ENCODE measurements at regions of chr1 and their contacts with region 1.

Region 1: GRCh38 chr1:180631766-180632325 is at the start of gene XPR1:
- DNase-seq: peak; percentile 80 to 99 (median 96)
- ATAC-seq: peak; percentile 99
- H3K4me3 ChIP-seq: peak within 1 kb of the TSS; percentile 85
- H3K4me3 Mint-ChIP-seq: no peak within 1 kb of the TSS
- H3K27ac ChIP-seq: peak within 1 kb of the TSS; percentile 94
- H3K27ac Mint-ChIP-seq: peak within 1 kb of the TSS in 5 of 9 donors; percentile 91 to 95 (median 93)
- H3K4me1 ChIP-seq: peaks cover 12 to 16% of the 10 kb centered on the region in 2 donors
- H3K4me1 Mint-ChIP-seq: peaks cover 0 to 19% (median 13%) of the 10 kb centered on the region in 7 donors
- H3K27me3 ChIP-seq: no peaks in the 10 kb centered on the region
- H3K27me3 Mint-ChIP-seq: peaks cover 0 to 10% (median 5%) of the 10 kb centered on the region in 5 donors
- total RNA-seq, gene XPR1: 12.9 to 19.7 (median 15.4) TPM

Region 2: DNA sequence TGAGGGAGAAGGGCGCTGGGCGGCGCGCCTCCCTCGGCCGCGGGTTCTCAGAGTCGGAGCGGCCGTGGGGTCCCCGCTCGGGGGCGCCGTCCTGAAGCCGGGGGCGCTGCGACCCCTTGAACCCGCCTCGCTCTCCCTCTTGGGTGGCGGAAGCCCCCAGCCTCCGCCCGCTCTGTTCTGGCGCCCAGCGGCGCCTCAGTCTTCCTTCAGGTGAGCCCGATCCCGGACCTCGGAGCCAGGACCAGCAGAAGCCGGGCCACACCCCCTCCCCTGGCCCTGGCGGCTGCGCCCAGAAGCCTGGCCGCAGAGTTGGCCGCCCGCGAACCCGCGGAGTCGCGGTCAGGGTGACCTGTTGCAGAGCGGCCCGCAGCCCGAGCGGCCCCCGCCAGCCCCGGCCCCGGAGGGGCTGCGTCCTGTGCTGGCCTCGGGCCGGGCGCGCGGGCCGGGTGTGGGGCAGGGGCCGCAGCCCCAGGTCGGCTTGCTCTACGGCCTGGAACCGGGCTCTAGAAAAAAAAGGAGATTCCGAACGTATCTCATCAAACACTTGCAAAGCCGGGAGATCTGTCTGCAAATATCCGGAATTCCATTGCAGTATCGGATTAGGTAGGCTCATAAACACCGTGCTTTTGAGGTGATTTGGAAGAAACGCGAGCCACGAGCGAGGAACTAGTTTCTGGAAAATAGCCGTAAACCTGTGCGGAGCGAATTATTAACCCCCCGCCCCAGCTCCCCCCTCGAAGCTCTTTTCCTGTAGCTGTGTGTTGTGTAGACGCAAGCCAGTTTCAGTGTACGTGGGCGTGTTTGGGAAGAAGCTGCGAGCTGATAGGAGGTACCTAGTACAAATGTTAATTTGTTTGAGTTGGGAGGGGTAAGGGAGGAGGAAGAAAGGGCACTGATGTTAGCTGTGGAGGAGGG is 1906.0 kb before region 1 on chr1:
- CTCF ChIA-PET with region 1: no interaction called
- POLR2A ChIA-PET with region 1: no interaction called
- intact Hi-C with region 1: loop called in 1 of 2 experiments (anchors 10 kb)
- DNase-seq: peak; percentile 25 to 83 (median 73)
- ATAC-seq: peak; percentile 85
- H3K4me3 ChIP-seq: peak overlapping the region; percentile 93
- H3K4me3 Mint-ChIP-seq: peak overlapping the region; percentile 79 to 96 (median 88)
- H3K27ac ChIP-seq: peak overlapping the region; percentile 86
- H3K27ac Mint-ChIP-seq: peak overlapping the region; percentile 14 to 95 (median 88)
- H3K4me1 ChIP-seq: peaks cover 0 to 5% of the 10 kb centered on the region in 2 donors
- H3K4me1 Mint-ChIP-seq: peaks cover 11 to 39% (median 27%) of the 10 kb centered on the region in 7 donors
- H3K27me3 ChIP-seq: no peaks in the 10 kb centered on the region
- H3K27me3 Mint-ChIP-seq: peaks cover 0 to 29% (median 0%) of the 10 kb centered on the region in 5 donors

Region 3: GRCh38 chr1:179809506-179810366 is 822.1 kb before region 1 on chr1:
- CTCF ChIA-PET with region 1: no interaction called
- POLR2A ChIA-PET with region 1: no interaction called
- intact Hi-C with region 1: loop called in 1 of 2 experiments (anchors 1 kb)
- DNase-seq: peak; percentile 53 to 82 (median 78)
- ATAC-seq: peak; percentile 87
- H3K4me3 ChIP-seq: no peak overlapping the region
- H3K4me3 Mint-ChIP-seq: peak overlapping the region in 5 of 10 donors; percentile 20 to 46 (median 32)
- H3K27ac ChIP-seq: no peak overlapping the region
- H3K27ac Mint-ChIP-seq: peak overlapping the region in 6 of 9 donors; percentile 2 to 82 (median 26)
- H3K4me1 ChIP-seq: peaks cover 6 to 13% of the 10 kb centered on the region in 2 donors
- H3K4me1 Mint-ChIP-seq: peaks cover 1 to 13% (median 12%) of the 10 kb centered on the region in 7 donors
- H3K27me3 ChIP-seq: no peaks in the 10 kb centered on the region
- H3K27me3 Mint-ChIP-seq: peaks cover 0 to 6% (median 0%) of the 10 kb centered on the region in 5 donors

Region 4: DNA sequence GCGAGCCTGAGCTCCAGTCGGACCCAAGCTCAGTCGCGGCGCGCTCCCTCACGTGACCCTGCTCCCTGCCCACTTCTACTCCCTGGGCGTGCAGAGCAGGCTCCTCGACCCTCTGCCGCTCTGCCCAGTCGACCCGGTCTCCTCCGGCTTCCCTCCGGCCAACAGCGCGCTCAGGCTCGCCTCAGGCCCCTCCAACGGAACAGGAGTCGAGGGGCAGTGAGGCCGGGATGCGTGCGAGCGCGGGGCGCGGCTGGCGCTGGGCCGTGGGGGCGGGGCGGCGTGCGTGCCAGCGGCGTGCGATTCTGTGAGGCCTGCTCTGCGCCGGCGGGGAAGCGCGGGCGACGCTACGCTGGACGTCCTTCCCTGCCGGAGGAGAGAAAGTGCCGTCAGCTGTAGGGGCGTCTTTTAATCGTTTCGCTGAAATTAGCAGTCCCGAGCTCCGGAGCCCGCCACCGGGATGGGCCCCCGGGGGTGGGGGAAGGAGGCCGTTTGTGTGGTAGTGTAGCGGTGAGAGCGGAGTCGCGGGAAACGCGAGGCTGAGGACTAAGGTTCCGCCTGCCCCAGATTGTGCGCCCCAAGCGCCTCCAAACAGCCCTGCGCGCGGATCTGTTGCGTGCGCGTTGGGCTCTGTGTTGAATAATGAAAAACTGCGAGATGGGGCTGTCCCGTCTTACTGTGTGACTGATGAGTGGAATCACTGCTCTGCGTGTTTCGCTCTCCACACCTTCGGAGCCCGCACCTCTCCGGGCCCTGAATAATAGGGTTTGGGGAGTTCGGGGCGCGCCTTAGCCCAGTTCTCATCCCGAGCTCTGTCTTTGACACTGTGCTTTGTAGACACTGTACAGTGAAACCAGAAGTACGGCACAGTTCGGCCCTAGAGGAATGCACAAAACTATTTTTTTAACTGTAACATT is 129.2 kb before region 1 on chr1 and contains the start of gene ACBD6:
- CTCF ChIA-PET with region 1: interaction called, 4 read pairs
- POLR2A ChIA-PET with region 1: interaction called, 14 read pairs
- intact Hi-C with region 1: loop called (anchors 1 kb)
- DNase-seq: peak; percentile 80 to 92 (median 89)
- ATAC-seq: peak; percentile 95
- H3K4me3 ChIP-seq: peak within 1 kb of the TSS; percentile 85
- H3K4me3 Mint-ChIP-seq: peak within 1 kb of the TSS; percentile 89 to 100 (median 97)
- H3K27ac ChIP-seq: peak within 1 kb of the TSS; percentile 79
- H3K27ac Mint-ChIP-seq: peak within 1 kb of the TSS; percentile 91 to 99 (median 98)
- H3K4me1 ChIP-seq: peaks cover 10 to 18% of the 10 kb centered on the region in 2 donors
- H3K4me1 Mint-ChIP-seq: peaks cover 17 to 55% (median 38%) of the 10 kb centered on the region in 7 donors
- H3K27me3 ChIP-seq: no peaks in the 10 kb centered on the region
- H3K27me3 Mint-ChIP-seq: peaks cover 0 to 5% (median 0%) of the 10 kb centered on the region in 5 donors
- total RNA-seq, gene ACBD6: 44.2 to 75.7 (median 47.3) TPM

Region 5: DNA sequence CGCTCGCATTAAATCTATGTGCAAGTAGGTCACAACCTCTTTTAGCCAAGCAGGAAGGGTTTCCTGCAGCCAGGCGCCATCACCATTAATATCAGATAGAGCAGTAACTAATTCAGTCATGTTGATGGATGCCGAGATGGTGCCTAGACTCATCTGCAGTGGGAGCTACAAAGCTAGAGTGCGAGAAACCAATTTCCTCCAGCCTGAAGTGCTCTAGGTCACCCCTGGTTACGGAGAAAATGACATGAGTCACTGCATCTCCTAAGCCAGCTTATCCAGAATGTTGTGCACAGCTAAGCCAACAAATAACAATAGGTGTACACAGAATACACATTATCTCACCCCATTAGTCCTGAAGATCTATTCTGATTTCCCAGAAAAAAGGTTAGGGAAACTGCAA is 37.1 kb before region 1 on chr1:
- CTCF ChIA-PET with region 1: no interaction called
- POLR2A ChIA-PET with region 1: no interaction called
- intact Hi-C with region 1: no loop called
- DNase-seq: no peak
- ATAC-seq: no peak
- H3K4me3 ChIP-seq: no peak overlapping the region
- H3K4me3 Mint-ChIP-seq: no peak overlapping the region
- H3K27ac ChIP-seq: no peak overlapping the region
- H3K27ac Mint-ChIP-seq: no peak overlapping the region
- H3K4me1 ChIP-seq: no peaks in the 10 kb centered on the region
- H3K4me1 Mint-ChIP-seq: peaks cover 0 to 1% (median 0%) of the 10 kb centered on the region in 7 donors
- H3K27me3 ChIP-seq: no peaks in the 10 kb centered on the region
- H3K27me3 Mint-ChIP-seq: peaks cover 9 to 29% (median 13%) of the 10 kb centered on the region in 5 donors

Region 6: DNA sequence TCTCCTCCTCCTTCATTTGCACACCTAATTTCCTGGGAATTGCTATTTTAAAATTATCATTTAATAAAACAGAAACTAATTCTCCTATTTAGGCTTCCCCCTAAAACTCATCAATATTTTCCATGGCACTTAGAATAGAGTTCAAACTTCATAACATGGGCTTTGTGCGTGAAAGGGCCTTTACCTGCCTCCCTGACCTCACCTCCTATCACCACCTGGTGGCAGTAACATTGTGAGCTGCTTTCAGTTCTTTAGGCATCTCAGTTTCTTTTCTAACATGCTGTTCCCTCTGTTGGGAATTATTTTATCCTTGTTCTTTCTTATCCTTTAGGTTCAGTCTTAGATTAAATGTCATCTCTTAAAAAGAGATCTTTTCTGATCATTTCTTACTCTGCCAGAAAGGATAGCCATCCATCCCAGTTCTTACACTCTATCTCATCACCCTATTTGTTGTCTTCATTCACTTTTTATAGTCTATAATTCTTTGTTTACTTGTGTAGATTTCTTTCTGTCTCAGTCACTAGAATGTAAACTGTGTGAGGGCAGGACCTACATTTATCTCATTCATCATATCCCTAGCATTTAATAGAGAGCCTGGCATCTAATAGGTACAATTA is 147.0 kb after region 1 on chr1:
- CTCF ChIA-PET with region 1: no interaction called
- POLR2A ChIA-PET with region 1: no interaction called
- intact Hi-C with region 1: loop called in 1 of 2 experiments (anchors 5 kb)
- DNase-seq: no peak
- ATAC-seq: no peak
- H3K4me3 ChIP-seq: no peak overlapping the region
- H3K4me3 Mint-ChIP-seq: no peak overlapping the region
- H3K27ac ChIP-seq: no peak overlapping the region
- H3K27ac Mint-ChIP-seq: no peak overlapping the region
- H3K4me1 ChIP-seq: no peaks in the 10 kb centered on the region
- H3K4me1 Mint-ChIP-seq: peaks cover 4 to 30% (median 13%) of the 10 kb centered on the region in 7 donors
- H3K27me3 ChIP-seq: no peaks in the 10 kb centered on the region
- H3K27me3 Mint-ChIP-seq: no peaks in the 10 kb centered on the region

Region 7: DNA sequence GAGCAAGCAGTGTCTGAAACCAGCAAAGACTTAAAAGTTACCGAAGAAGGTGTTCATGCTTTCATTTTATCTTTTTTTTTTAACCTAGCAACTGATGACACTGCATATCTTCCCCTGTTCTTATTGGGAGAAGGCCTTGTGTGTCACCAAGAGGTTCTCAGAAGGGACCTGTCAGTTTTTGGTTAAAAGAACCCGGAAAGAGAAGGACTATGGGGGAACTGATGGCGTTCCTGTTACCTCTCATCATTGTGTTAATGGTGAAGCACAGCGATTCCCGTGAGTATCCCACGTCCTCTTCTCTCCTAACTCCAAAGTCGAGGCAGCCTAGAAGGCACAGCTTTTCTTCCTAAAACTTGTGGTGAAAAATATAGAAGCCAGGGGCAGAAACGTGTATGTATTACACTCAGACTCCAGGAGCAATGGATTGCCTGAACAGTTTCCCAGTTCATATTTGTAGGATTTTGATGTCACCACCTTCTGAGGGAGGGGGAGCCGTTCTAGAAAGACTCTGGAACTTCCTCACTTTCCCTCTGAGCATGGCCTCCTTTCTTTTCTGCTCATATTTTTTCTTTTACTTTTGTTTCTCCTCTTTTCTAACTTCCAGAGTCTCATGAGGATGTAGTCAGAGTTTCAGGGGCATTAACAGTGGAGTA is 402.1 kb after region 1 on chr1 and contains the start of gene MR1:
- CTCF ChIA-PET with region 1: no interaction called
- POLR2A ChIA-PET with region 1: no interaction called
- intact Hi-C with region 1: loop called in 1 of 2 experiments (anchors 1 kb)
- DNase-seq: peak in 8 of 9 donors; percentile 32 to 92 (median 88)
- ATAC-seq: peak; percentile 97
- H3K4me3 ChIP-seq: peak within 1 kb of the TSS; percentile 77
- H3K4me3 Mint-ChIP-seq: peak within 1 kb of the TSS; percentile 84 to 99 (median 97)
- H3K27ac ChIP-seq: peak within 1 kb of the TSS; percentile 95
- H3K27ac Mint-ChIP-seq: peak within 1 kb of the TSS; percentile 95 to 100 (median 98)
- H3K4me1 ChIP-seq: peaks cover 32 to 42% of the 10 kb centered on the region in 2 donors
- H3K4me1 Mint-ChIP-seq: peaks cover 39 to 69% (median 61%) of the 10 kb centered on the region in 7 donors
- H3K27me3 ChIP-seq: no peaks in the 10 kb centered on the region
- H3K27me3 Mint-ChIP-seq: peaks cover 0 to 6% (median 0%) of the 10 kb centered on the region in 5 donors
- total RNA-seq, gene MR1: 19.8 to 35.8 (median 29.7) TPM

Region 8: DNA sequence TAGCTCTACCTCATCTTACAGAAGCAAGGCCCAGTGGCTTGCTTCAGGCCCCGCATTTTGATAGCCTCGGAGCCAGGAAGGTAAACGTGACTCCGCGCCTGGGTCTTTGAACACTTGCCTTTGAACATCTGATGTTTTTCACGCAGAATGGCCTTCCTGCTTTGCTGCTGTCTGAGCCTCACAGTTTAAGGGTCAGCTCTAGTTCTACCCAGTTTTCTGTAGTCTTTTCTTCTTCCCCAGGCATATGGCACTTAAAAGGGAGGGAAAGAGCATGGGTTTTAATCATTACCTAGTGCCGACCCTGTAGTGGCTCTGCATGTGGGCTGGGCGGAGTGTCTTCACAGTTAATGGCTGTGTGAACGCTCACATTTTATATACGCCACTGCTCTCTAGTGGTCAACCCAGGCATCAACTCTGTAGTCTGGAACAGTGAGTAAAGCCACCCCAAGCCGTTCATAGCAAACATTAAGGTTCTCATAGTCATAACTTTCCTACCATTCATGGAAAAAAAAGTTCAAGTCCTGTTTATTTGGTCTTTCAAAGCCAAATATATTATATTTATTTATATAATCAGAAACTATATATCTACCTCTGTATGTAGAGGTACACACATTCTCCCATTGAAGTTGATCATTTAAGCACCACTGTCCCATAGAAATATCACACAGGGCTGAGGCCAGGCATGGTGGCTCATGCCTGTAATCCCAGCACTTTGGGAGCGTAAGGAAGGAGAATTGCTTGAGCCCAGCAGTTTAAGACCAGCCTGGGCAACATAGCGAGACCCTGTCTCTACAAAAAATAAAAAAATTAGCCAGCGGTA is 534.7 kb after region 1 on chr1:
- CTCF ChIA-PET with region 1: no interaction called
- POLR2A ChIA-PET with region 1: no interaction called
- intact Hi-C with region 1: loop called in 1 of 2 experiments (anchors 5 kb)
- DNase-seq: peak; percentile 35 to 84 (median 78)
- ATAC-seq: peak; percentile 99
- H3K4me3 ChIP-seq: no peak overlapping the region
- H3K4me3 Mint-ChIP-seq: peak overlapping the region; percentile 58 to 85 (median 80)
- H3K27ac ChIP-seq: no peak overlapping the region
- H3K27ac Mint-ChIP-seq: peak overlapping the region in 8 of 9 donors; percentile 43 to 92 (median 76)
- H3K4me1 ChIP-seq: peaks cover 0 to 5% of the 10 kb centered on the region in 2 donors
- H3K4me1 Mint-ChIP-seq: peaks cover 4 to 10% (median 9%) of the 10 kb centered on the region in 7 donors
- H3K27me3 ChIP-seq: no peaks in the 10 kb centered on the region
- H3K27me3 Mint-ChIP-seq: peaks cover 0 to 32% (median 0%) of the 10 kb centered on the region in 5 donors